ENCODE measurements at regions of chr20 and their contacts with region 1.

Region 1: DNA sequence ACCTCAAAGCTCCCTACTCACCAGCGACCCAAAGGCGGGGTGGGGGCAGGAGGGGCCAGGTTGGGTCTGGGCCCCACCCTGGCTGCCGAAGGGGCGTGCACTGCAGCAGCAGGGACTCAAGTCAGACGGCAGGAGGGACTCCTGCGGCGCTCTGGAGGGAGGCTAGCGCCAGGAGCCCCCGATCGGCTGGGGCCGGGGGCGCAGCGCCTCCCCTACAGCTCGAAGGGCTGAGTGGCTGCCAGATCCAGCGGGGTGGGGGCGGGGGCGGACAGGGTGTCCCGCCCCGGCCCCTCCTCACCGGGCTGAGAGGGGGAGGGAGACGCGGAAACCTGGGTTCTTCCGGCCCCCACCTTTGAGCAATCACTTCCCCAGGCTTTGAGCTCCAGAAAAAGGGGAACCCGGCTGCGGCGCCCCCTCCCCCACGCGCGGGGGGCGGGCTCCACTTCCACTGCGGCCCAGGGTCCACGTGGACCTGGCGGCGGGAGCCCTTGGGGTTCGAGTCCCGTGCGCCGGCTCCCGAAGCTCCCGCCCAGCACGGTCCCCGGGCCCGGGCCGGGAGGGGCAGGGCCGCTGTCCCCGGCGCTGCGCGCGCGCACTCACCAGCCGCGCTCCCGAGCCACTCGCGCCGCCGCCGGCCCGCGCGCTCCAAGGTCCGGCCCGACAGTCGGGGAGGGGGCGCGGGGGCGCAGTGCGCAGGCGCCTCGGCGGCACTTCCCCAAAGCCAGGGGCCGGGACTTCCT is at the start of gene RGS19:
- DNase-seq: peak in 1 of 2 experiments; percentile 86
- H3K4me3 ChIP-seq: peak within 1 kb of the TSS; percentile 60 to 92 (median 71)
- H3K27ac ChIP-seq: no peak within 1 kb of the TSS; the same call in 1 of the 2 replicates
- H3K4me1 ChIP-seq: peaks cover 0 to 35% (median 18%) of the 10 kb centered on the region in 4 experiments; a peak in 6 of 7 replicates
- H3K27me3 ChIP-seq: peaks cover 2 to 36% (median 29%) of the 10 kb centered on the region in 4 experiments
- CTCF ChIP-seq: no peak
- EP300 ChIP-seq: no peak
- POLR2A ChIP-seq: no peak
- RAD21 ChIP-seq: no peak
- total RNA-seq, gene RGS19: 12.7 and 13.1 TPM in 2 replicates

Region 2: GRCh38 chr20:64062596-64063388 is 16.7 kb before region 1 on chr20 and contains the start of gene TCEA2:
- CTCF ChIA-PET with region 1: interaction called, 139 read pairs
- POLR2A ChIA-PET with region 1: interaction called, 27 read pairs
- DNase-seq: peak in 1 of 2 experiments; percentile 95
- H3K4me3 ChIP-seq: peak within 1 kb of the TSS; percentile 66 to 81 (median 72)
- H3K27ac ChIP-seq: no peak within 1 kb of the TSS
- H3K4me1 ChIP-seq: peaks cover 3 to 15% (median 9%) of the 10 kb centered on the region in 4 experiments
- H3K27me3 ChIP-seq: no peaks in the 10 kb centered on the region; a peak in 2 of 7 replicates
- CTCF ChIP-seq: 0 out of 4 replicates have a peak, but pooled peaks of 1 of the 3 experiments have one; percentile 3
- EP300 ChIP-seq: no peak
- POLR2A ChIP-seq: peak in 1 of 2 experiments; percentile 21; a peak in 1 of 3 replicates
- RAD21 ChIP-seq: no peak
- total RNA-seq, gene TCEA2: 41.4 and 46.3 TPM in 2 replicates

Region 3: GRCh38 chr20:64101731-64102621 is 22.5 kb after region 1 on chr20:
- CTCF ChIA-PET with region 1: interaction called, 41 read pairs
- POLR2A ChIA-PET with region 1: interaction called, 5 read pairs
- DNase-seq: peak in 1 of 2 experiments; percentile 94
- H3K4me3 ChIP-seq: peak overlapping the region; percentile 37 to 71 (median 52)
- H3K27ac ChIP-seq: no peak overlapping the region
- H3K4me1 ChIP-seq: peaks cover 0 to 8% (median 3%) of the 10 kb centered on the region in 4 experiments; a peak in 3 of 7 replicates
- H3K27me3 ChIP-seq: peaks cover 2 to 26% (median 21%) of the 10 kb centered on the region in 4 experiments
- CTCF ChIP-seq: peak; percentile 71 to 87 (median 78)
- EP300 ChIP-seq: no peak
- POLR2A ChIP-seq: no peak
- RAD21 ChIP-seq: peak; percentile 60 to 76

Region 4: DNA sequence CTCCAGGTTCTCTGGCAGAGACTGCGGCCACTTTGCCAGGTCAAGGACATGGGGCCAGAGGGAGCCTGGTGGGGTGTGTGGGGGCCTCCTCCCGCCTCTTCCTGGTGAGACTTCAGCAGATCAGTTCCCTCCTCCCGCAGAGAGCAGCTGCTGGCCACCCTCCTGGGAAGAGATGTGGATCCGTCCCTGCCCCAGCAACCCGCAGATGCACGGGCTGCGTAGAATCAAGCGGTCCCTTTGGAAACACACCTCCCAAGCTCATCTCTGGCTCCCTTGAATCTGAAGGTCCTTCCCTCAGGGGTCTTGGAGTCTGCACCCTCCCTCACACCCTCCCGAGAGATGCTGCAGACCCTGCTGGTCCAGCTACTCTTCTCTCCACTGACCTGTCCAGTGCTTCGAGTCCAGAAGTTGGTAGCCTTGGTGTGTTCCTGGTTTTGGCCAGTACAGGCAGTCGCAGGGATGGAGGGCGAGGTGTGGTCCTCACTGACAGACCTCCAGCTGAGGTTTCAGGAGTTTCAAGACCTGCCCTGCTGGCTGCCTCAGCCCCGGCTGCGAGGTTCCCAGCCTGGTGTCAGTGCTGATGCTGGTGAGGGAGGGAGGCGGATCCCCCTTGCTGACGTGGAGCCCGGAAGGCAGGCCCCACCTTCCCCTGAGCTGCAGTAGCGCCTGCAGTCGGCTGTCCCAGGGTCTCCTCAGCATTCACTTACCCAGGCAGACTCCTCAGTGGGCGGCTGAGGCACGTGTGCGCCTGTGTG is 27.7 kb after region 1 on chr20 and contains the start of gene NPBWR2:
- CTCF ChIA-PET with region 1: interaction called, 41 read pairs
- POLR2A ChIA-PET with region 1: interaction called, 3 read pairs
- DNase-seq: peak in 1 of 2 experiments; percentile 44
- H3K4me3 ChIP-seq: no peak within 1 kb of the TSS
- H3K27ac ChIP-seq: no peak within 1 kb of the TSS; the same call in 1 of the 2 replicates
- H3K4me1 ChIP-seq: peaks cover 0 to 8% (median 3%) of the 10 kb centered on the region in 4 experiments; a peak in 3 of 7 replicates
- H3K27me3 ChIP-seq: peaks cover 2 to 10% (median 9%) of the 10 kb centered on the region in 4 experiments
- CTCF ChIP-seq: no peak
- EP300 ChIP-seq: no peak
- POLR2A ChIP-seq: no peak
- RAD21 ChIP-seq: no peak
- total RNA-seq, gene NPBWR2: not detected in 2 replicates

Region 5: DNA sequence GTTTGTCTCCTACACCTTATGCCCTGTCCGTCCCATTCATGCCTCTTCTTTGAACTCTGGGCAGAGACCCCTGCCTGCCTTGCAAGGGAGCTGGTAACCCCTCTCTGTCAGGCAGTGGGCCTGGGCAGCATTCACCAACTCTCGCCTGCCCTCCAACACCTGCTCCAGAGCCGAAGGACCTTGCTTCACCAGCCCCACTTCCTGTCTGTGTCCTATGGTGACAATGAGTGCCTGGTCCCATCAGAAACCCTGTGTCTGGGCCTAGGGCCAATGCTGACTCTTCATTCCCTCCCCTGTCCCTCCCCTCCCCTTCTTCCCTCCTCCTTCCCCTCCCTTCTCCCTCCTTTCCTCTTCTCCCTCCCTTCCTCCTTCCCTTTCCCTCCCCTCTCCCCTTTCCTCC is 153.4 kb after region 1 on chr20:
- CTCF ChIA-PET with region 1: no interaction called
- POLR2A ChIA-PET with region 1: no interaction called
- DNase-seq: no peak
- H3K4me3 ChIP-seq: no peak overlapping the region
- H3K27ac ChIP-seq: no peak overlapping the region
- H3K4me1 ChIP-seq: no peaks in the 10 kb centered on the region
- H3K27me3 ChIP-seq: no peaks in the 10 kb centered on the region
- CTCF ChIP-seq: no peak
- EP300 ChIP-seq: no peak
- POLR2A ChIP-seq: no peak
- RAD21 ChIP-seq: no peak

Measured in H1 (cell line).